ENCODE measurements at regions of chr7 and their contacts with region 1.

Region 1: DNA sequence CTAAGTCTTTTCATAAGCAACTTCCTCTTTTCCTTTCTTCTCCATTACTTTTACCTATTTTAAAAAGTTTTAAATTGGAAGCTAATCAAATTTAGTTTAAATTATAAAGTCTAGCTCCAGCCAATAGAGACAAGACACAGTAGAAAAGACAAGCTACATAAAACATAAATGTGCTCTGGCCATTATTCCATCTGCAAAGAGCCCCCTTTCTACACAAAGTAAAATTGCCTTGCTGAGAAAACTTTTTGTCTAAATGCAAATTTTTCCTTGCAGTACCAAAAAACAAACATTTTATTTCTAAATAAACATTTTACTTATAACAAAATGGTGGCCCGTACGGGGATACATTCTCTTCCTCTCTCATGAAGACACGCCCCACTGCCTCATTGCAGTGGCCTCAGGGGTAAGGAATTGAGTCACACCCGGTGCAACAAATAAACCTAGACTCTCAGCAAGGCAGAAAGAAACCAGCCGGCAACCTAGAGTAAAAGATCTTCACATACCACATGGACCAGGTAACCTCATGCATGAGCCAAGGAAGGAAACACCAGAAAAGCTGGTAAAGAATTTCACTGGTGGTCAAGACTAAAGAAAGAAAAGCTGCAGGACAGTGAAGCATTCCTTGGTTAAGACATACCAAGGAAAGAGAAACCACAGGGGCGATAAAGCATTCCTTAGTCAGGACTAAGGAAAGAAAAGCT is 71.6 kb upstream of the ZNF746 start:
- DNase-seq: no peak
- H3K4me3 ChIP-seq: no peak overlapping the region
- H3K27ac ChIP-seq: no peak overlapping the region
- H3K4me1 ChIP-seq: no peaks in the 10 kb centered on the region
- H3K27me3 ChIP-seq: no peaks in the 10 kb centered on the region
- CTCF ChIP-seq: no peak
- EP300 ChIP-seq: no peak
- POLR2A ChIP-seq: no peak

Region 2: DNA sequence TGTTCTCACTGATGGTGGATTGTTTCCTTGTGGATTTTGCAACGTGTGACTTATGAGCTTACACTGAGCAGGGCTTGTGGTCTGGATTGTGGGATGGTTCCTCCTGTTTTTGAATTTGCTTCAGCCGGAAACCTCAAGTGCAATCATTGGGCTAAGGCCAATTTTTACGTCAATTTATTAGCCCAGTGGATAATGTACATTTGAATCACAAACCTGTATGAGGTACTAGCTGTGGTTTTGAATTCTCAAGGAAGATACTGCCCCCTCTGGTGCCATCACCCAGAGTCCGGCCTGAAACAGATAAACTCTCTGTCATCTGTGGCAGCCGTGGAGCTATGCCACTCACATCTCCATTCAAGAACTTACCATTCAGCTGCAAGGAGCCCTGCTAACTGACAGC is 101.0 kb before region 1 on chr7:
- intact Hi-C with region 1: no loop called
- DNase-seq: no peak
- H3K4me3 ChIP-seq: no peak overlapping the region
- H3K27ac ChIP-seq: no peak overlapping the region
- H3K4me1 ChIP-seq: no peaks in the 10 kb centered on the region
- H3K27me3 ChIP-seq: no peaks in the 10 kb centered on the region
- CTCF ChIP-seq: no peak
- EP300 ChIP-seq: no peak
- POLR2A ChIP-seq: no peak

Region 3: DNA sequence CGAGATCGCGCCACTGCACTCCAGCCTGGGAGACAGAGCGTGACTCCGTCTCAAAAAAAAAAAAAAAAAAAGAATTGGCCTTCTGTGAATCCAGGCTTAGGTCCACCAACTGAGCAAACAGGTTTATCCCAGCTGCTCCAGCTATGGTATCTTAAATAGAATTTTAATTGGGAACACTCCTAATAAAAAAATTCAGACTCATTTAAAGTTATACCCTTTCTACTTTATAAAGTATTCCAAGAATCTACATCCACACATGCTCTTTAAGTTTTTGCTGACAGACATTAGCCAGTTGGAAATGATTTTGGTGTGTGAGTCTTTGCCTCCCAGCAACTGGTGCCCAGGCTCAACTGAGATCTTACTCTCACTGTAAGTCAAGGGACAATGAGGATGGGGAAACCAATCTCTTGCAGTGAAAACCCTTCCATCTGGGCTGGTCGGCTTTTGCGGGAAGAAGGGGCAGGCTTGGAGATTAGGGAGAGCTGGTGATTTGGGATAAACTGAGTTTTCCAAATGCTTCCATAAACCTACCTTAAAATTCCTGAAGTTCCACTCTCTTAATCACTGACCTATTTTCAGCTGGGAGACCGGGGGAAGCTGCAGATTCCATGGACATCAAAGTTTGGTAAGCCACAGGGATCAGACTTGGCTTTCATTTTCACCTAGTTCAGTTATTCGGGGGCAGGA is 17.6 kb after region 1 on chr7:
- intact Hi-C with region 1: loop called in 1 of 4 experiments (anchors 2 kb)
- DNase-seq: no peak
- H3K4me3 ChIP-seq: no peak overlapping the region
- H3K27ac ChIP-seq: no peak overlapping the region
- H3K4me1 ChIP-seq: no peaks in the 10 kb centered on the region
- H3K27me3 ChIP-seq: no peaks in the 10 kb centered on the region
- CTCF ChIP-seq: no peak
- EP300 ChIP-seq: no peak
- POLR2A ChIP-seq: no peak

Region 4: DNA sequence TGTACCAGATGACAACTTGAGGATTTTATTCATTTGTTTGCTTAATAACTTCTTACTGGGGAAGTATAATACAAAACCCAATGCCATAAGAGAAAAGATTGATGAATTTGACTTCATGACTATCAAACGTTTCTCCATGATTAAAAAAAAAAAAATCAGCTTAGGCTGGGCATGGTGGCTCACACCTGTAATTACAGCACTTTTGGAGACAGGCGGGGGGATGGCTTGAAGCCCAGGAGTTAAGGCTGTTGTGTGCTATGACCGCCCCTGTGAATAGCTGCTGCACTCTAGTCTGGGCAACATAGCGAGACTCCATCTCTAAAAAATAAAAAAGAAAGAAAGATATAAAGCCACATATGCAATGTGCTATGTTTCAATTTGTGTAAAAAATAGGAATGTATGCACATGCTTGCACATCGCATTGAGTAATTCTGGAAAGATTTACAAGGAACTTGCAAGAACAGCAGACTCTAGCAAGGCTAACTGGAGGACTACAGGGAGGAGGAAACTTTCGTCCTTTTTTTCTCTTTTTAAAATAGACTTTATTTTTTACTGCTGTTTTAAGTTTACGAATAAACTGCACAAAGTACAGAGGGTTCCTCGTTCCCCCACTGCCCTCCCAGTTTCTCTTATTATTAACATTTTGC is 782.5 kb after region 1 on chr7:
- intact Hi-C with region 1: no loop called
- DNase-seq: no peak
- H3K4me3 ChIP-seq: no peak overlapping the region
- H3K27ac ChIP-seq: no peak overlapping the region
- H3K4me1 ChIP-seq: peaks cover 7% of the 10 kb centered on the region
- H3K27me3 ChIP-seq: no peaks in the 10 kb centered on the region
- CTCF ChIP-seq: no peak
- EP300 ChIP-seq: no peak
- POLR2A ChIP-seq: no peak

Region 5: GRCh38 chr7:150567169-150567568 is 998.0 kb after region 1 on chr7 and contains the start of gene GIMAP4:
- intact Hi-C with region 1: loop called in 1 of 4 experiments (anchors 5 kb)
- DNase-seq: no peak
- H3K4me3 ChIP-seq: peak within 1 kb of the TSS; percentile 17
- H3K27ac ChIP-seq: no peak within 1 kb of the TSS
- H3K4me1 ChIP-seq: no peaks in the 10 kb centered on the region
- H3K27me3 ChIP-seq: no peaks in the 10 kb centered on the region
- CTCF ChIP-seq: no peak
- EP300 ChIP-seq: no peak
- POLR2A ChIP-seq: no peak
- total RNA-seq, gene GIMAP4: 5.4 to 18.8 (median 9.6) TPM